ENCODE measurements at regions of chr6 and their contacts with region 1.

Region 1: DNA sequence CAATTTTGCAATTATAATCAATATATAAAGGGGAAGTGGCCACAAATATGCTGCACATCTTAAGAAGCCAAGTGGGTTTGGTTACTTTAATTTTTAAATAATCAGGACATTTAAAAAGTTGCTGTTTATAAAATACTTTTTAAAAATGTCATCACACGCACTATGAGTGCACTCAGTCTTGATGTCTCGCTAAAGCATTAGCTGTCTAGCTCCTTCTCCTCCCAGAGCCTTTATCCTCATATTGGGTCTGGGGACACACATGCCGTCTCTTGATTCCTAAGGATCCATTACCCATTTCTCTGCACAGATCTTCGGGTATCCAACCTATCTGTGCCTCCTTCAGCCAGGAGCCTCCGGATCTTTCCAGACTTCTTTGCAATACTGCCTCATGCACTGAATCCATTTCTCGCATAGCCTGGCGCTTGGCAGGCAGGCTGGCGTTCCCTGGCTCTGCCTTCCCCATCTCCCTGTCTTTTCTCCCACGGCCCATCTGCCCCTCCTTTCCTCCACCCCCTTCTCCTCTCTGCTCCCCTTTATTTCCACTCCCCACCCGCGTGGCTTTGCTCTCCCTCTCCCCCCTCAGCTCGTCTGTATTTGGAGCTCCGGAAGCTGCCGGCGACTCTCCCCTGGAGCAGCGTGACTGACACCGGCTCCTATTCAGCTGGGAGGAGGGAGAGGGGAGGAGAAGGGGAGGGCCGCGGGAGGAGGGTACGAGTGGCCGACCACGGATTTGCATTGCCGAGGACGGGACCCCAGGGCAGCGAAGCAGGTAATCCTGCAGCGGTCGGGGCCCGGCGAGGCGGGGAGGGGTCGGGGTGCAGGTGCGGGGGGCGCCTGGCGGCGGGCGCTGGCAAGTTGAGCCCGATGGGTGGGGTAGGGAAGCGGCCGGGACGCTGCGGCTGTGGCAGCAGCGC is at the start of gene CAP2:
- DNase-seq: peak in 1 of 2 donors; percentile 81
- H3K4me3 ChIP-seq: peak within 1 kb of the TSS; percentile 81 to 94
- H3K27ac ChIP-seq: peak within 1 kb of the TSS; percentile 75 to 87
- H3K4me1 ChIP-seq: peaks cover 0 to 10% of the 10 kb centered on the region in 2 donors
- H3K27me3 ChIP-seq: no peaks in the 10 kb centered on the region
- CTCF ChIP-seq: no peak
- total RNA-seq, gene CAP2: 7.1 TPM

Region 2: DNA sequence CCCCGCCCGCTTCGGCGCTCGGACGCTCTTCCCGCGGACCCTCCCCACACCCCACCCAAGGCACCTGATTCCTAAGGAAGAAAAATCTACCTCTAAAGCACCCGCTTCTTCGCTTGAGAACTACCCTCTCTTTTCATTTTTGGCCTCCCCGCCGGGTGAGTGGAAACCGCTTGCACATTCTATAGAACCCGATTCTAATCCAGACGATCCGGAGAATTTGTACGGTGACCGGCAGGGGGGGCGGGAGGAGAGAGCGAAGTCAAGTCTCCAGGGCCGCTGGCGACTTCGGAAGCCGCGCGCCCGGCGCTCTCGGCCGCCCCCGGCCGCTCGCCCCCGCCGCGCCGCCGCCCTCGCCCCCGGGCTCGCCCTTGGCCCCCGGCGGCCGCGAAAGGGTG is 112.1 kb before region 1 on chr6 and contains the start of gene RBM24:
- intact Hi-C with region 1: loop called (anchors 5 kb)
- DNase-seq: peak in 1 of 2 donors; percentile 84
- H3K4me3 ChIP-seq: peak within 1 kb of the TSS; percentile 82 to 97
- H3K27ac ChIP-seq: peak within 1 kb of the TSS; percentile 75 to 91
- H3K4me1 ChIP-seq: peaks cover 0 to 3% of the 10 kb centered on the region in 2 donors
- H3K27me3 ChIP-seq: no peaks in the 10 kb centered on the region
- CTCF ChIP-seq: peak; percentile 18 to 44 (median 41)
- total RNA-seq, gene RBM24: 5.4 TPM

Region 3: DNA sequence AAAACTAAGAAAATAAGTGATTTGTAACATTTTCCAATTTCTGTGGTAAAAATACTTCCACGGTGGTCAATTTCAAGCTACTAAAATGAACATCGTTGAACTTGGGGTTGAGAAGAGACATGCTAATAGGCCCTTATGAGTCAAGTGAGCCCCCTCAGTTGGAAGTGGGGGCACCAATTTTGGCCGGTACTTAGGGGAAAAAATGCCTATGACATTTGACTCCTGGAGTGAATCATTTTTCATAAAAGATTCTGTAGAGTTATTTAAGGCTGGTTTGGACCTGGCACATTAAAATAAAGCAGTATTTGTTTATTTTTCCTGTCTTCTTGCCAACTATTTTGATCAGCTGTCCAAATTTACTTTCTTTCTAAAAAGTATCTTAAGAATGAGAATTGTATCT is 32.2 kb before region 1 on chr6:
- intact Hi-C with region 1: no loop called
- DNase-seq: no peak
- H3K4me3 ChIP-seq: no peak overlapping the region
- H3K27ac ChIP-seq: peak overlapping the region; percentile 18 to 51
- H3K4me1 ChIP-seq: peaks cover 0 to 3% of the 10 kb centered on the region in 2 donors
- H3K27me3 ChIP-seq: no peaks in the 10 kb centered on the region
- CTCF ChIP-seq: no peak

Region 4: GRCh38 chr6:17470938-17471327 is 77.7 kb after region 1 on chr6:
- intact Hi-C with region 1: loop called (anchors 2 kb)
- DNase-seq: no peak
- H3K4me3 ChIP-seq: peak overlapping the region in 1 of 2 donors; percentile 14
- H3K27ac ChIP-seq: peak overlapping the region; percentile 61 to 81
- H3K4me1 ChIP-seq: peaks cover 0 to 17% of the 10 kb centered on the region in 2 donors
- H3K27me3 ChIP-seq: no peaks in the 10 kb centered on the region
- CTCF ChIP-seq: peak in 2 of 3 experiments; percentile 17 to 19